ENCODE measurements at regions of chr5 and their contacts with region 1.

Region 1: GRCh38 chr5:10627160-10627701 is 63.4 kb downstream of the ANKRD33B start:
- DNase-seq: no peak
- ATAC-seq: peak in 1 of 2 donors; percentile 5
- H3K4me3 ChIP-seq: peak overlapping the region; percentile 43
- H3K27ac ChIP-seq: peak overlapping the region; percentile 77
- H3K4me1 ChIP-seq: peaks cover 21% of the 10 kb centered on the region
- H3K27me3 ChIP-seq: no peaks in the 10 kb centered on the region
- CTCF ChIP-seq: no peak

Region 2: DNA sequence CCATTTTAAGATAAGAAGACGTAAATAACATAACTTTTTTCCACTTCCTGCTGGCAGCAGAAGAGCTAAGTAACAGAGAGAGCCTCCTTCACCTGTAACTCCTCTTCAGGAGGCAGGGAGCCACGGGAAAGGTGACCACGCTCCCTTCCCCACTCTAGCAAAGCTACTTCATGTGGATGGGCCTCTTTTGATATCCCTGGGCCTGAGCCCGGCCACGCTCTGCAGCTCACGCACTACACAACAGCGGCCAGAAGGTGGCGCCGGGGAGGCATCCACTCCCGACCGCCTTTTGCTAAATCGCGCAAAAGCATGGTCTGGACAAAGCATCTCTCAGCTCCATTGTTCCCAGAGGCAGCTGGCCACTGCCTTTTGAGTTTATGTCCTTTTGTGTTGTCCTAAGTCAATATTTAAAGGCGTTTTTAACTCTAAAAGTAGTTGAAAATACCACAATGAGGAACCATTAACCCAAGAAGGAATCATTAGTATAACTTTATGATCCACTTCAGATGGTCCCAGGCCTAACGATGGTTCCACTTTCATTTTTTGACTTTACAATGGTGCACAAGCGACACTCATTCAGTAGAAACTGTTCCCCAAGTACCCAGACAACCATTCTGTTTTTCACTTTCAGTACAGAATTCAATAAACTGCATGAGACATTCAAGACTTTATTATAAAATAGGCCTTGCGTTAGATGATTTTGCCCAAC is 343.1 kb before region 1 on chr5:
- intact Hi-C with region 1: no loop called
- DNase-seq: peak; percentile 91
- ATAC-seq: peak; percentile 90 to 95
- H3K4me3 ChIP-seq: no peak overlapping the region
- H3K27ac ChIP-seq: no peak overlapping the region
- H3K4me1 ChIP-seq: peaks cover 16% of the 10 kb centered on the region
- H3K27me3 ChIP-seq: no peaks in the 10 kb centered on the region
- CTCF ChIP-seq: peak; percentile 96

Region 3: GRCh38 chr5:10452768-10453331 is 174.4 kb before region 1 on chr5:
- intact Hi-C with region 1: loop called (anchors 5 kb)
- DNase-seq: no peak
- ATAC-seq: peak; percentile 78 to 90
- H3K4me3 ChIP-seq: no peak overlapping the region
- H3K27ac ChIP-seq: no peak overlapping the region
- H3K4me1 ChIP-seq: peaks cover 24% of the 10 kb centered on the region
- H3K27me3 ChIP-seq: no peaks in the 10 kb centered on the region
- CTCF ChIP-seq: peak; percentile 71